GM12878 (cell line): ENCODE measurements at regions of chr14 and their contacts with region 1.

Region 1: GRCh38 chr14:61025251-61026223 is 44.5 kb downstream of the SLC38A6 start:
- DNase-seq: no peak
- ATAC-seq: peak; percentile 89
- H3K4me3 ChIP-seq: no peak overlapping the region
- H3K27ac ChIP-seq: no peak overlapping the region
- H3K4me1 ChIP-seq: no peaks in the 10 kb centered on the region
- H3K27me3 ChIP-seq: no peaks in the 10 kb centered on the region
- CTCF ChIP-seq: peak; percentile 70 to 85 (median 79)
- EP300 ChIP-seq: no peak
- POLR2A ChIP-seq: no peak
- RAD21 ChIP-seq: peak; percentile 92

Region 2: DNA sequence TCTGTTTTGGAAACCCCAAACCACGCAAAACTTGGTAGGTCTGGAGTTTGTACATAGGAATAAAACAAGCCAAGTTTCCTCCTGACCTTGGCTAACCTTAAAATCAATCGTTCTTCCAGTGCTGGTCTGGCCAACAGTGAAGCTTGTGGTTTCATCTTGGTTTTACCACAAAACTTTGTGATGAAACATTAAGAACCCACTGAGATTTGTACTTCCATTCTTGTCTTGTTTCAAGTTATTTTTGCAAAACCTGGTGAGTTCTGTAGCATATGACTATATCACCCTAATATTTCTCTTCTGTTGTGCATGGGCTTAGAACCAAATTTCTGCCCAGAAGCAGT is 402.6 kb before region 1 on chr14:
- CTCF ChIA-PET with region 1: interaction called, 36 read pairs
- POLR2A ChIA-PET with region 1: no interaction called
- RAD21 ChIA-PET with region 1: interaction called, 13 read pairs
- SMC1A ChIA-PET with region 1: interaction called, 13 read pairs
- in situ Hi-C with region 1: loop called (anchors 5 kb)
- intact Hi-C with region 1: loop called (anchors 1 kb)
- DNase-seq: no peak
- ATAC-seq: no peak
- H3K4me3 ChIP-seq: no peak overlapping the region
- H3K27ac ChIP-seq: no peak overlapping the region
- H3K4me1 ChIP-seq: no peaks in the 10 kb centered on the region
- H3K27me3 ChIP-seq: no peaks in the 10 kb centered on the region
- CTCF ChIP-seq: no peak
- EP300 ChIP-seq: no peak
- POLR2A ChIP-seq: no peak
- RAD21 ChIP-seq: no peak

Region 3: DNA sequence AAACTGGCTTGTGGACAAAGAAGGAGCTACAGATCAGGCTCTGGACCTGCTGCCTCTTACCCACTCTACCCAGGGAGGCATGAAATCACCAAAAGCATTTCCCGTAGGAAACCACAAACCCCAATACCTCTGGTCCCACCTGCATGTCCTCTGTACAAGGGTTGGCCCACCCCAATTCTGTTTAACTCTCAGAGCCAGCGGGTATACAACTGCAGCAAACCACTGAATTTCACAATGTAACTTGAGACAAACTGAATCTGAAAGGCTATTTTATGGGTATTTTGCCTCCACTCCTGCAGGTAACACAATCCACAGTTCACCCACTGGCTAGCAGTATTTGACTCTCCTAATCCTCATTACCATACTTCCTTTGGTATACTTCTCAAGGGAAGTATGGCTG is 392.8 kb before region 1 on chr14:
- CTCF ChIA-PET with region 1: interaction called, 4 read pairs
- POLR2A ChIA-PET with region 1: no interaction called
- RAD21 ChIA-PET with region 1: interaction called, 11 read pairs
- SMC1A ChIA-PET with region 1: interaction called, 14 read pairs
- in situ Hi-C with region 1: loop called (anchors 5 kb)
- intact Hi-C with region 1: no loop called
- DNase-seq: peak; percentile 30
- ATAC-seq: peak; percentile 84
- H3K4me3 ChIP-seq: no peak overlapping the region
- H3K27ac ChIP-seq: no peak overlapping the region
- H3K4me1 ChIP-seq: peaks cover 8% of the 10 kb centered on the region; the same call in 1 of the 2 replicates
- H3K27me3 ChIP-seq: peaks cover 2 to 18% of the 10 kb centered on the region in 2 experiments
- CTCF ChIP-seq: no peak
- EP300 ChIP-seq: no peak
- POLR2A ChIP-seq: no peak
- RAD21 ChIP-seq: no peak

Region 4: GRCh38 chr14:60656686-60657455 is 368.7 kb before region 1 on chr14:
- CTCF ChIA-PET with region 1: interaction called, 8 read pairs
- POLR2A ChIA-PET with region 1: no interaction called
- RAD21 ChIA-PET with region 1: interaction called, 5 read pairs
- SMC1A ChIA-PET with region 1: interaction called, 8 read pairs
- in situ Hi-C with region 1: no loop called
- intact Hi-C with region 1: loop called (anchors 1 kb)
- DNase-seq: peak; percentile 31
- ATAC-seq: peak; percentile 94
- H3K4me3 ChIP-seq: peak overlapping the region; percentile 85
- H3K27ac ChIP-seq: no peak overlapping the region
- H3K4me1 ChIP-seq: peaks cover 9% of the 10 kb centered on the region
- H3K27me3 ChIP-seq: peaks cover 10 to 25% of the 10 kb centered on the region in 2 experiments
- CTCF ChIP-seq: peak; percentile 51 to 75 (median 58); a peak in 5 of 6 replicates
- EP300 ChIP-seq: no peak
- POLR2A ChIP-seq: no peak
- RAD21 ChIP-seq: peak; percentile 57

Region 5: GRCh38 chr14:60734465-60735242 is 290.9 kb before region 1 on chr14 and contains the start of gene MNAT1:
- CTCF ChIA-PET with region 1: no interaction called
- POLR2A ChIA-PET with region 1: no interaction called
- RAD21 ChIA-PET with region 1: no interaction called
- SMC1A ChIA-PET with region 1: no interaction called
- in situ Hi-C with region 1: no loop called
- intact Hi-C with region 1: loop called (anchors 10 kb)
- DNase-seq: peak; percentile 56
- ATAC-seq: peak; percentile 95
- H3K4me3 ChIP-seq: peak within 1 kb of the TSS; percentile 85
- H3K27ac ChIP-seq: peak within 1 kb of the TSS; percentile 56
- H3K4me1 ChIP-seq: no peaks in the 10 kb centered on the region
- H3K27me3 ChIP-seq: peaks cover 0 to 3% of the 10 kb centered on the region in 2 experiments; a peak in 1 of 4 replicates
- CTCF ChIP-seq: no peak
- EP300 ChIP-seq: 0 out of 4 replicates have a peak, but pooled peaks of 1 of the 2 experiments have one; percentile 14
- POLR2A ChIP-seq: peak; percentile 93
- RAD21 ChIP-seq: peak; percentile 24
- polyA plus RNA-seq, gene MNAT1: 62.0 to 67.4 TPM

Region 6: DNA sequence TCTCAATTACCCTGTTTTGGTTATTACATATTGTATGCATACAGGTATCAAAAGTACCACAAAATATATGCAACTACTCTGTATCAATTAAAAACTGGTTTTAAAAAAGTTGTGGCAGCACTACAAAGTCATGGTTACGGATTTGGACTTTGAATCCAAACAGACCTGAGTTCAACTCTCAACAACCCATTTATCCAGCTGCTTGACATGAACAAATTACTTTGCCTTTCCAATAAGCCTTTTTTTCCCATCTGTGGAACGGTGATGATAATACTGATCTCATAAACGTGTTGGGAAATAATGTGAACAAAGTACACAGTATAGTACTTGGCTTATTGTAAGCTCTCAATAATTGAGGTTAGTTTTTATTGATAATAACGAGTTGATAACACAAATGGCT is 206.0 kb before region 1 on chr14:
- CTCF ChIA-PET with region 1: no interaction called
- POLR2A ChIA-PET with region 1: no interaction called
- RAD21 ChIA-PET with region 1: no interaction called
- SMC1A ChIA-PET with region 1: no interaction called
- in situ Hi-C with region 1: no loop called
- intact Hi-C with region 1: no loop called
- DNase-seq: no peak
- ATAC-seq: no peak
- H3K4me3 ChIP-seq: no peak overlapping the region
- H3K27ac ChIP-seq: no peak overlapping the region
- H3K4me1 ChIP-seq: peaks cover 5% of the 10 kb centered on the region; the same call in 1 of the 2 replicates
- H3K27me3 ChIP-seq: no peaks in the 10 kb centered on the region
- CTCF ChIP-seq: no peak
- EP300 ChIP-seq: no peak
- POLR2A ChIP-seq: no peak
- RAD21 ChIP-seq: no peak

Region 7: DNA sequence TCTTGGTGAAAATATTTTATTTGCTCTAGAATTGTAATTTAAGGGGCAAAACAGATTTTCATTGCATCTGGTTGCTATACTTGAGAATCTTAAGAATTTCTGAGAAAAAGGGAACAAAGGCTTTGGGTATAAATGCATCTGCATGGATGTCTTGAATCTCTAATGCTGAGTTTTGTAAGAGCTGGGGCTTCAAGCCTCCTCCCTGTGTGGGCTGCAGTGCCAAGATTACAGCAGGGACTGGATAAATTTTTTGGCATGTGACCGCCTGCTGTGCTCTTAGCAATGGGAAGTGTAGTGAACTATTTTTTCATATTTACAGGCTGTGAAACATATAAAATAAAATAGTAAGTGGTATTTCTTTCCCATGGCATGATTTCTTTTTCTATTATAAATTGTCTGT is 25.5 kb after region 1 on chr14:
- CTCF ChIA-PET with region 1: no interaction called
- POLR2A ChIA-PET with region 1: no interaction called
- RAD21 ChIA-PET with region 1: no interaction called
- SMC1A ChIA-PET with region 1: no interaction called
- in situ Hi-C with region 1: no loop called
- intact Hi-C with region 1: no loop called
- DNase-seq: no peak
- ATAC-seq: no peak
- H3K4me3 ChIP-seq: no peak overlapping the region
- H3K27ac ChIP-seq: no peak overlapping the region
- H3K4me1 ChIP-seq: no peaks in the 10 kb centered on the region
- H3K27me3 ChIP-seq: no peaks in the 10 kb centered on the region
- CTCF ChIP-seq: no peak
- EP300 ChIP-seq: no peak
- POLR2A ChIP-seq: no peak
- RAD21 ChIP-seq: no peak

Region 8: GRCh38 chr14:61196792-61197191 is 171.3 kb after region 1 on chr14:
- CTCF ChIA-PET with region 1: interaction called, 3 read pairs
- POLR2A ChIA-PET with region 1: no interaction called
- RAD21 ChIA-PET with region 1: no interaction called
- SMC1A ChIA-PET with region 1: no interaction called
- in situ Hi-C with region 1: no loop called
- intact Hi-C with region 1: loop called (anchors 10 kb)
- DNase-seq: no peak
- ATAC-seq: no peak
- H3K4me3 ChIP-seq: no peak overlapping the region
- H3K27ac ChIP-seq: no peak overlapping the region
- H3K4me1 ChIP-seq: no peaks in the 10 kb centered on the region
- H3K27me3 ChIP-seq: peaks cover 0 to 4% of the 10 kb centered on the region in 2 experiments; a peak in 2 of 4 replicates
- CTCF ChIP-seq: peak in 1 of 3 experiments; percentile 25; a peak in 2 of 6 replicates
- EP300 ChIP-seq: no peak
- POLR2A ChIP-seq: no peak
- RAD21 ChIP-seq: peak; percentile 27; the same call in 1 of the 2 replicates

Region 9: DNA sequence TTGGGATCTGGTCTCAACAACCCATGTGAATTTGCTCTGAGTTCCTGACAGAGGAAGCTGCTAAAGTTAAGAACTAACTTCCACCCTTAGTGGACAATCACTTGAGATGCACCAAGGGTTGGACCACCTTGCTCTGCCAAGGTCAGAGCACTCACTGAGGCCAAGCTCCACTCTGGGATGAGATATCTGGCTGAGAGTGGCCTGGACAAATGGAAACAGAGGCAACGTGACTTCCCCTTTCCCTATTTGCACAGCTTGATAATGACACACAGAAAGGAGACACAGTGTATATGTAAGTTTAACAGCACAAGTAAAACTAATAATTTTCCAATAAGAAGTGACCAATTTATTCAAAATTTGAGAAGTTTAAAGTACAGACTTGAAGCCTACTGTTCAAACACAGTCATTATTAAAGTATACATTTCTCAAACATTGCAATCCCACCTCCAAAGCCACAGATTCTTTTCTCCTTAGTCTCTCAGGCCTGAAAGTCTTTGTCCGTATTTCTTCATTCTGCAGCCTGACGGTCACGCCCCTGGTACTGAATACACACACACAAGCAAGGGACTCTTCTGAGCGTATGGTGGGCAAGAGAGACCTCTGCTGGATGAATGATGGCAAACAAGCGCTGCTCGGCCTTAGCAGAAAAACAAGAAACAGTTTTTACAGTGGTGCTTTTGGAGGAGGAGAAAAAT is 227.0 kb after region 1 on chr14:
- CTCF ChIA-PET with region 1: interaction called, 15 read pairs
- POLR2A ChIA-PET with region 1: no interaction called
- RAD21 ChIA-PET with region 1: interaction called, 9 read pairs
- SMC1A ChIA-PET with region 1: interaction called, 9 read pairs
- in situ Hi-C with region 1: loop called (anchors 5 kb)
- intact Hi-C with region 1: loop called (anchors 1 kb)
- DNase-seq: peak; percentile 27
- ATAC-seq: peak; percentile 99
- H3K4me3 ChIP-seq: no peak overlapping the region
- H3K27ac ChIP-seq: no peak overlapping the region
- H3K4me1 ChIP-seq: no peaks in the 10 kb centered on the region
- H3K27me3 ChIP-seq: no peaks in the 10 kb centered on the region
- CTCF ChIP-seq: peak; percentile 83 to 90 (median 86)
- EP300 ChIP-seq: no peak
- POLR2A ChIP-seq: no peak
- RAD21 ChIP-seq: peak; percentile 99